ENCODE measurements at regions of chr17 and their contacts with region 1.

Region 1: GRCh38 chr17:40909351-40909750 is 24.3 kb upstream of the KRT20 start:
- DNase-seq: peak; percentile 96
- H3K4me3 Mint-ChIP-seq: peak overlapping the region; percentile 61
- H3K27ac Mint-ChIP-seq: peak overlapping the region; percentile 91
- H3K4me1 Mint-ChIP-seq: peaks cover 16% of the 10 kb centered on the region
- H3K27me3 Mint-ChIP-seq: no peaks in the 10 kb centered on the region
- CTCF ChIP-seq: peak; percentile 71

Region 2: GRCh38 chr17:40622509-40622928 is 286.8 kb before region 1 on chr17:
- CTCF ChIA-PET with region 1: no interaction called
- POLR2A ChIA-PET with region 1: no interaction called
- intact Hi-C with region 1: loop called (anchors 10 kb)
- DNase-seq: no peak
- H3K4me3 Mint-ChIP-seq: no peak overlapping the region
- H3K27ac Mint-ChIP-seq: no peak overlapping the region
- H3K4me1 Mint-ChIP-seq: no peaks in the 10 kb centered on the region
- H3K27me3 Mint-ChIP-seq: no peaks in the 10 kb centered on the region
- CTCF ChIP-seq: no peak

Region 3: DNA sequence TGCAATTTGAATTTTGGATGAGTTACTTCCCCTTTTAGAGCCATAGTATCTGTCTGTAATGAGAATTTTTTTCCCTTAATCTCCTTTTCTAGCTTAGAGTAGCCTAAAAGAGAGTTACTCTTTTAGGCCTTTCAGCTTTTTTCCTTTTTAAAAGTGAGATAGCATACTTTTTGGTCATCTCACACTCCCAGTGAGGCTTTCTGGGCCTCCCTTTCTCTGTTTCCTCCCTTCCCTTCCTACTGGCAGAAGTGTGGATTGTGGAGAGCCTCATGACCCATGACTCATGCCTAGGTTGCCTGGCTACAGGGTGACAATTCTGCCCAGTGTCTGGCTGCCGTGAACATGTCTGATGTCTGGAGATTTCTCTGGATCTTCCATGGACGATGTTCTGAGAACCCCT is 12.9 kb after region 1 on chr17:
- CTCF ChIA-PET with region 1: no interaction called
- POLR2A ChIA-PET with region 1: no interaction called
- intact Hi-C with region 1: no loop called
- DNase-seq: peak; percentile 62
- H3K4me3 Mint-ChIP-seq: no peak overlapping the region
- H3K27ac Mint-ChIP-seq: peak overlapping the region; percentile 92
- H3K4me1 Mint-ChIP-seq: peaks cover 10% of the 10 kb centered on the region
- H3K27me3 Mint-ChIP-seq: peaks cover 11% of the 10 kb centered on the region
- CTCF ChIP-seq: no peak

Region 4: DNA sequence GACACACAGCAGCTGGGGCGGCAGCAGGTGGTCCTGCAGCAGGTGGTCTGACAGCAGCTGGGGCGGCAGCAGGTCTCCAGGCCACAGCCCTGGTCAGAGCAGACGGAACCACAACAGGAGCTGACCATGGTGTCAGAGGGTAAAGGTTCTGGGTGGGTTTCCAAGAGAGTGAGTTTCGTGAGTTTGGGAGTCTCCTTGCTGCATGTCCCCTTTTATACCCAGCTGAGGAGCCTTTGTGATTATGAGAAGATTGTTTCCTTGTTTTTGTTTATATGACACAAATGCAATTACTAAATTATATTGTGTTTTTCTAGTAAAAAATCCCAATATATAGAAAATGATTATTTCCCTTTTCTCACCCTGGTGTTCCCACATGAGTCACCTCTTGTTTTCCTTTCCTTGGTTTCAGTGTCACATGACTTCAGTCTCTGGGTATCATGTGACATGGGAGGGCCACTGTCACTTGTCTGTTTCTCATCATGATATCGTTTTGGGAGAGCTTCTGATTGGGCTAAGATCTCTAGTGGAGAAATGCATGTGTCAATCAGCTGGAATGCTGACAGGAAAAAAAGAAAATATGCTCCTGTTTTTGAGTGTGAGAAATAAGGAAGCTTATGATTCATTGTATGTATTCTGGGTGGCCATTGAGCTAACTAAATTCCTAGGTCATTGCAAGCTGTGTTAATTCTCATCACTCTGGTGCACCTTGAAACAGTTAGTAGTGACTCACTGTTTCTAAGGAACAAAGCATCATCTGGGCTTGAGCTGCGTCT is 231.2 kb after region 1 on chr17 and contains the start of gene KRTAP4-6:
- CTCF ChIA-PET with region 1: no interaction called
- POLR2A ChIA-PET with region 1: no interaction called
- intact Hi-C with region 1: loop called (anchors 2 kb)
- DNase-seq: peak; percentile 49
- H3K4me3 Mint-ChIP-seq: no peak within 1 kb of the TSS
- H3K27ac Mint-ChIP-seq: peak within 1 kb of the TSS; percentile 3
- H3K4me1 Mint-ChIP-seq: peaks cover 6% of the 10 kb centered on the region
- H3K27me3 Mint-ChIP-seq: no peaks in the 10 kb centered on the region
- CTCF ChIP-seq: no peak
- total RNA-seq, gene KRTAP4-6: not detected in 2 replicates

Region 5: DNA sequence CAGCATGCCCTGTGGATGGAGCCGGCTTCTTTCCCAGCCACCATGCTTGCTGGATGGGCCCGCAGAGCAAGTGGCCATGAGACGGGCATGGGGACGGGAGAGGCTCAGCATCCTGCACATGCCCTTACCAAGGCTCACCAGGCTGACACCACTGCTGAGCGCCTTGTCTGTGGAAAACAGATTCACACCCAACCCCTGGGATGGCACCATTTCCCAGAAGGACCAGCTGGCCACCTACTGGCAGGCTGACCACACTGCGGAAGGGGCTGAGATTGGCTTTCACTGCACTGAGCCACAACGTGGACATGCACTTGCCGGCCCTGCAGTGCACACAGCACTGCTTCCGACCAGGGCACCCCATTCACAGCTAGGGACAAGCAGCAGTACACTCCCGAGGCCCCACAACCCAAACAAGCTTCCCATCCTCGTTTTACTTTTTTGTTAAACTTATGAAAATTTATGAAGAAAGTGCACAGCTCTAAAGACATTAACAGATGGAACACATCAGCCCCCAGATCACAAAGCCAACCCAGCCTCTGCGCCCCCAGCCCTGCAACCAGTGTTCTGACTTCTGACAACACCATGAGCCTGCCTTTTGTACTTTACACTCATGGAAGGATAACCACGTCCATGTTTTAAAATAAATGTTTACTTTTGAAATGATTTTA is 420.1 kb after region 1 on chr17:
- CTCF ChIA-PET with region 1: interaction called, 57 read pairs
- POLR2A ChIA-PET with region 1: interaction called, 4 read pairs
- intact Hi-C with region 1: loop called (anchors 1 kb)
- DNase-seq: peak; percentile 62
- H3K4me3 Mint-ChIP-seq: no peak overlapping the region
- H3K27ac Mint-ChIP-seq: no peak overlapping the region
- H3K4me1 Mint-ChIP-seq: no peaks in the 10 kb centered on the region
- H3K27me3 Mint-ChIP-seq: no peaks in the 10 kb centered on the region
- CTCF ChIP-seq: peak; percentile 69

Region 6: DNA sequence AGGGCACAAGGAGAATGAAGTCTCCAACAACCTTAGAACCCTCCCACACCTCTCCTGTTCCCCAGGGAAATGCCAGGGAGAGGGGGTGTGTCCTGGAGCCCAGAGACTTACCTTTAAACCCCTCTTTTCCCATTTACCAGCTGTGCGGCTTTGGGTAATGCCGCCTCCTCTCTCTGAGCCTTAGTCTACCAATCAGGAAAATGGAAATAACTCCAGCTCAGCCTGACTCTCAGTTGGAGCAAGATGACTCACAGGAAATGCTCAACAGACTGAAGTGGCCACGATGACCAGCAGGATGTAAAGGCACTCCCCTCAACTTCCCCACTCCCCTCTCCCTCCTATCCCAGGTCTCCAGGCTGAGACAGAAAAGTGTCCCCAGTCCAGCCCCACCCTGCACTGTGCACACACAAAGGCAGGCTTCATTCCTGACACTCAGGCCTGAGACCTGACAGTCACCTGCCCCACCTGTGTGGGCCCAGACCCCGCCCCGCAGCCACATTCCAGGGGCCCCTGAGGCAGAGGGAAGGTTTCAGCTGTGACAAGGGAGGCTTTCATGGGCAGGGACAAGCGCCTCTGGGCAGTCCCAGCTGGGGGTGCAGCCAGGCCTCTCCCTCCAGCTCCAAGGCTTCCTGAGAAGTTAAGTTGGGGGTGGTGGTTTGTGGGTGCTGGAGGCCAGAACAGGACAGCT is 612.4 kb after region 1 on chr17:
- CTCF ChIA-PET with region 1: no interaction called
- POLR2A ChIA-PET with region 1: interaction called, 12 read pairs
- intact Hi-C with region 1: loop called (anchors 1 kb)
- DNase-seq: peak; percentile 87
- H3K4me3 Mint-ChIP-seq: peak overlapping the region; percentile 49
- H3K27ac Mint-ChIP-seq: peak overlapping the region; percentile 88
- H3K4me1 Mint-ChIP-seq: peaks cover 55% of the 10 kb centered on the region
- H3K27me3 Mint-ChIP-seq: no peaks in the 10 kb centered on the region
- CTCF ChIP-seq: no peak

Region 7: GRCh38 chr17:42067351-42068091 is 1158.2 kb after region 1 on chr17:
- CTCF ChIA-PET with region 1: no interaction called
- POLR2A ChIA-PET with region 1: no interaction called
- intact Hi-C with region 1: no loop called
- DNase-seq: peak; percentile 61
- H3K4me3 Mint-ChIP-seq: no peak overlapping the region
- H3K27ac Mint-ChIP-seq: no peak overlapping the region
- H3K4me1 Mint-ChIP-seq: no peaks in the 10 kb centered on the region
- H3K27me3 Mint-ChIP-seq: peaks cover 12% of the 10 kb centered on the region
- CTCF ChIP-seq: peak; percentile 85